ENCODE measurements at regions of chr2 and their contacts with region 1.

Region 1: GRCh38 chr2:236824877-236825692 is 255.5 kb downstream of the ACKR3 start:
- DNase-seq: no peak
- H3K4me3 ChIP-seq: no peak overlapping the region
- H3K27ac ChIP-seq: no peak overlapping the region
- H3K4me1 ChIP-seq: no peaks in the 10 kb centered on the region
- H3K27me3 ChIP-seq: no peaks in the 10 kb centered on the region
- CTCF ChIP-seq: no peak
- EP300 ChIP-seq: no peak
- POLR2A ChIP-seq: no peak

Region 2: DNA sequence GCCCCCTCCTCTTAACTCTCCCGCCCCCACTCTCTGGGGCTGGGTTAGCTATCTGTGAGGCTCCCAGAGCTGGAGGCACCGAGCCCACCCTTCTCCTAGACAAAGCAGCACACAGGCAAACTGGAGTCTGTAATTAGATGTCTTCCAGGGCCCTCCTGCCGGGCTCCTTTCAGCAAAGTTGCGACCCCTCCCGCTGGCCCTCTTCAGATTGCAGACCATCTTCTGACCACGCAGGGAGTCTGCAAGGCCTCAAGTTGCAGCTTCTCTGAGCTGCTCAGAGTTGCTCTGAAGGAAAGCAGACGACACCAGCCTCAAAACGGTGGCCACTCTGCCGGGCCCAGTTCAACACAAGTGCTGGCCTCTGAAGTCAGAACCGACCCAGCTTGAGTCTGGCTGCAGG is 32.2 kb after region 1 on chr2:
- intact Hi-C with region 1: loop called in 1 of 4 experiments (anchors 1 kb)
- DNase-seq: no peak
- H3K4me3 ChIP-seq: no peak overlapping the region
- H3K27ac ChIP-seq: no peak overlapping the region
- H3K4me1 ChIP-seq: no peaks in the 10 kb centered on the region
- H3K27me3 ChIP-seq: no peaks in the 10 kb centered on the region
- CTCF ChIP-seq: no peak
- EP300 ChIP-seq: no peak
- POLR2A ChIP-seq: no peak

Region 3: DNA sequence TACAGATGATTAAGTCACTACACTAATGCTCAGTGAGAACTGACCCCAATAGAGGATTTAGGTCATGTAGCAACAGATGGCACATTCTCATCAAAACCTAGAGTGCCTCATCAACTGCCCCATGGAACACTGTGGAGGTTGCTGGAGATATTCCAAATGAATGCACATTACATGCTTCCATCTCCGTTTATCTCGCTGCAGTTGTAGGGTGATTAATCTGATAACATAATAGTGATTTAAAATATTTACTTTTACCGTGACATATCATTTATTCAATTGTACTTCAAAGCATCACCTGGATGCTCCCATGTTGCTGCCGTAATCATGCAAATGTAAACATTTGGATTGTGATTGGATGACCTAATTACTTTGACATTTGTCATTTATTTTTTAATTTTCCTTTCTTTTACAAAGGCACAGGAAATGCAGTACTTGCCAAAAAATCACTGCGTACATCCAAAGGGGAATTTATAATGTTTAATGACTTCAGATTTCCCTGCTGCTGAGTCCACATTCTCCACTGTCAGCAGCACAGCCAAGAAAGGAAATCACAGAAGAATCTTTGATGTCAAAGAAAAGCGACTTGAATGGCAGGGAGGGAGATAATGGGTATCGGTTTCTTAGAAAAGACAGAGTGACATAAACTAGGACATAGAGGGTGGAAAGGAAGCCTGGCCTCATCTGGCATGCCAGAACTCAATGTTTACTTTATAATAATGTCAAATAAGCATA is 219.0 kb after region 1 on chr2:
- intact Hi-C with region 1: no loop called
- DNase-seq: no peak
- H3K4me3 ChIP-seq: no peak overlapping the region
- H3K27ac ChIP-seq: no peak overlapping the region
- H3K4me1 ChIP-seq: peaks cover 4% of the 10 kb centered on the region
- H3K27me3 ChIP-seq: no peaks in the 10 kb centered on the region
- CTCF ChIP-seq: no peak
- EP300 ChIP-seq: no peak
- POLR2A ChIP-seq: no peak